ENCODE measurements at regions of chr2 and their contacts with region 1.

Region 1: DNA sequence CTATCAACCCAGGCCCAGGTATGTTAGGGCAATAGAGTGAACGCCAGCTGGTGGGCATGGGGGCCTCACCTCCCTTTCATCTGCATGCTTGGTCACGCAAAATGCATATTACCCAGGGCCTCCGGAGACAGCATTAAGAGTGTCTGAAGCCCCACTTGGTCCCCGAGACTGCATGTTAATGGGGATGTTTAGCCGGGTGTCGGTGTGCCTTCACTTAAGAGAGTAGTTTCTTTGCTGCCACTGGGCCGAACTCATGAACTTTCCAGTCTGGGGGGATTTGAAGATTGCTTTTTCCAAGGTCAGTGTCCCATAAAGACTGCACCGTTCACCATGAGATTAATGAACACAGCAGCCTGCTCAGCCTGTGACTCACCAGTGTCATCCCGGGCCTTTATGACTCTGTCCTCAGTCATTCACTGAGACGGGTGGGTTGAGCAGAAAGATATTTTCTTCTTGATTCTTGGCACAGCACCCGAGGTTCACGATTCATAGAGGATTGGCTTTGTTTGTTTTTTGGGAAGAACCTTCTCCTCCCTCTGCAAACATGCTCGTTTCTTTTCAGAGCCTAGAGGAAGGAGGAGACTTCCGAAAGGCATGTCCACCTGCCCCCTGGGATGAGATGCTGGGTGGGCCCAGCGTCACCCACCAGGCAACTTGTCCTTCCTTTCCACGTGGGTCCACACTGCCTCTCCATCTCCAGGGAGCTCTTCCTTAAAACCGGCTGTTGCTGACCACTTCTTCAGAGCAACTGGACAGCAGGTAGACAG is 199.1 kb downstream of the GLI2 start:
- DNase-seq: peak; percentile 56 to 69
- H3K4me3 ChIP-seq: no peak overlapping the region
- H3K4me3 Mint-ChIP-seq: peak overlapping the region; percentile 68
- H3K27ac Mint-ChIP-seq: peak overlapping the region; percentile 92
- H3K4me1 ChIP-seq: peaks cover 67% of the 10 kb centered on the region
- H3K4me1 Mint-ChIP-seq: peaks cover 57% of the 10 kb centered on the region
- H3K27me3 ChIP-seq: no peaks in the 10 kb centered on the region
- H3K27me3 Mint-ChIP-seq: no peaks in the 10 kb centered on the region
- CTCF ChIP-seq: no peak

Region 2: DNA sequence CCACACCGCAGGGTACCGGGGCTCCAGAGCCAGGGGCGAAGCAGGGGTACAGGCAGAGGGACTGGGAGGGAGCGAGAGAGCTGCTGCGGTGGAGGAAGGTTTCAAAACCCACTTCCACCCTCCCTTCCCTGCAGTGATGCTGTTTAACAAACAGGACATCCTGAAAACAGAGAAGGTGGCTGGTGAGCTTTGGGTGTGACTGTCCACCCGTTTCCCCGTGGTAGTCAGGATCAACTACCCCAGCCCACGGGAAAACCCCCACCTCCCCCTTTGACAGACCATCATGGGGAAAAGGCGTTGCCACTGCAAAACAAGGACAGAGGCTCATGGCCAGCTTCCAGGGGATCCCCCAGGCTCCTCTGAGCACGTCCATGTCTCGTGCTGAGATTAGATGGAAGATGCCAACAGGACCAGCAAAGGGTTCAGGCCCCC is 724.5 kb before region 1 on chr2:
- CTCF ChIA-PET with region 1: no interaction called
- POLR2A ChIA-PET with region 1: no interaction called
- intact Hi-C with region 1: no loop called
- DNase-seq: no peak
- H3K4me3 ChIP-seq: no peak overlapping the region
- H3K4me3 Mint-ChIP-seq: no peak overlapping the region
- H3K27ac Mint-ChIP-seq: no peak overlapping the region
- H3K4me1 ChIP-seq: no peaks in the 10 kb centered on the region
- H3K4me1 Mint-ChIP-seq: no peaks in the 10 kb centered on the region
- H3K27me3 ChIP-seq: no peaks in the 10 kb centered on the region
- H3K27me3 Mint-ChIP-seq: no peaks in the 10 kb centered on the region
- CTCF ChIP-seq: no peak

Region 3: GRCh38 chr2:120735746-120736170 is 199.0 kb before region 1 on chr2 and contains the start of gene GLI2:
- CTCF ChIA-PET with region 1: no interaction called
- POLR2A ChIA-PET with region 1: no interaction called
- intact Hi-C with region 1: loop called (anchors 5 kb)
- DNase-seq: peak; percentile 78 to 85
- H3K4me3 ChIP-seq: peak within 1 kb of the TSS; percentile 39
- H3K4me3 Mint-ChIP-seq: peak within 1 kb of the TSS; percentile 84
- H3K27ac Mint-ChIP-seq: no peak within 1 kb of the TSS
- H3K4me1 ChIP-seq: peaks cover 3% of the 10 kb centered on the region; the same call in 1 of the 2 replicates
- H3K4me1 Mint-ChIP-seq: peaks cover 9% of the 10 kb centered on the region
- H3K27me3 ChIP-seq: 0 out of 2 replicates have a peak, but pooled peaks cover 3% of the 10 kb centered on the region
- H3K27me3 Mint-ChIP-seq: peaks cover 21% of the 10 kb centered on the region
- CTCF ChIP-seq: peak; percentile 74 to 75
- total RNA-seq, gene GLI2: 0.58 and 0.70 TPM in 2 replicates

Region 4: DNA sequence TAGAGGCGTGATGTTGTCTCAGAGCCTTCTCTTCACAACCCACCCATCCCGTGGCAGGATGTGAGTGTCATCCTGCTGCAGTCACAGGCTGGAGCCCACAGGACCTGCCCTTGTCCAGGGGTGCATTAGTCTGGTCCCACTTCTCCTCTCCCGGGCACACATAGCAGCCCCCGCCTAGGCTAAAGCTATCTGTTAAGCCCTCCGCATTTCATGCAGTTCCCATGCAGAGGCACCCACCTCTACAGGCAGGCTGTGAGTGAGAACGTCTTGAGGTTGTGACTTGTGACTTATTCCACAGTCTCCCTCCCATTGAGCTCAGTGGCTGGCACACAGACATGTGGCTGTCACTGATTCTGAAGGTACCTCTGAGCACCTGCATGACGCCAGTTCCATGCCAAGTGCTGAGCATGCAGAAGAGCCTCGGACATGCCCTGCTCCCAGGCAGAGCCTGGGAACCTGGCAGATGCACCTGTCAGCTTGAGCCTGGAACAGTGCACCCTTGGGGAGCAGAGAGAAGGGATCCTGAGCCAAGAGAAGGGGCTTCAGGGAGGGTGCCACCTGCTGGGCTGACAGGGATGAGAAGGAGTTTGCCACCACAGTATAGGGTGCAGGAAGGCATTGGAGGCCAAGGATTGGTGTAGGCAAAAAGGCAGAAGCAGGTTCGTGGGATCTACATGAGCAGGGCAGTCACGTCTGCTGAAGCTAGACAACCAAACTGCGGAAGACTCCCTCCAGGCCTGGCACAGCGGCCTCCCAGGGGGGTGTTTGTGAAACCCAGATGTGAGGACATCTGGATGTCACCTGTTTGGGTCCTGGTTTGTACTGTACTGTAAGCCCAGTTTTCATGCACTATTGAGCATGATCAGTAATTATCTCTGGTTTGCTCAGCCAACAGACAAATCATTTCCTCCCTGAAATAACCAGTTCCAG is 14.5 kb after region 1 on chr2:
- CTCF ChIA-PET with region 1: interaction called, 7 read pairs
- POLR2A ChIA-PET with region 1: no interaction called
- intact Hi-C with region 1: loop called (anchors 1 kb)
- DNase-seq: peak in 1 of 2 experiments; percentile 61
- H3K4me3 ChIP-seq: no peak overlapping the region
- H3K4me3 Mint-ChIP-seq: no peak overlapping the region
- H3K27ac Mint-ChIP-seq: no peak overlapping the region
- H3K4me1 ChIP-seq: no peaks in the 10 kb centered on the region
- H3K4me1 Mint-ChIP-seq: peaks cover 6% of the 10 kb centered on the region
- H3K27me3 ChIP-seq: no peaks in the 10 kb centered on the region
- H3K27me3 Mint-ChIP-seq: no peaks in the 10 kb centered on the region
- CTCF ChIP-seq: peak; percentile 51 to 68

Region 5: GRCh38 chr2:121008978-121009377 is 74.2 kb after region 1 on chr2:
- CTCF ChIA-PET with region 1: no interaction called
- POLR2A ChIA-PET with region 1: no interaction called
- intact Hi-C with region 1: no loop called
- DNase-seq: peak in 1 of 2 experiments; percentile 48
- H3K4me3 ChIP-seq: no peak overlapping the region
- H3K4me3 Mint-ChIP-seq: no peak overlapping the region
- H3K27ac Mint-ChIP-seq: no peak overlapping the region
- H3K4me1 ChIP-seq: no peaks in the 10 kb centered on the region; the same call in 1 of the 2 replicates
- H3K4me1 Mint-ChIP-seq: no peaks in the 10 kb centered on the region
- H3K27me3 ChIP-seq: no peaks in the 10 kb centered on the region
- H3K27me3 Mint-ChIP-seq: no peaks in the 10 kb centered on the region
- CTCF ChIP-seq: peak; percentile 23 to 32

Region 6: DNA sequence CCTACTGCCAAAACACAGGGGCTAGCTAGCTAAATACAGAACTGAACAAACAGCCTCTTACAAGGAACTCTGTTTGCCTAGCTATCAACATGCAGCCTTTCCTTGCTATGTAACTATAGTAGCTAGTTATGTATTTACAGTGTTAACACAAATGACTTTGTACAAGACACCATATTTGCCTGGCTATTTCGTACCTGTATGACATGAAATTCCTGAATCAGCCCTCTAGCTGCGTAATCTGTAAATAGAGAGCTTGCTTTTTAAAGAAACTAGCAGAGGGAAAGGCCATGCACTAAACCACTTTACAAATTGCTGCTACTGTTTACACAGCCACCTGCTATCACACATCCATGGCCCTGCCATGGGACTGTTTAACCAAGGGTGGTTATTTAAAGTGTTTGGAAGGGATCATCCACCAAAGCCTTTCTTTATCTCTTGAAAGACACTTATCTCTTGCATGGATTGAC is 101.5 kb after region 1 on chr2:
- CTCF ChIA-PET with region 1: interaction called, 10 read pairs
- POLR2A ChIA-PET with region 1: no interaction called
- intact Hi-C with region 1: loop called (anchors 1 kb)
- DNase-seq: peak; percentile 88
- H3K4me3 ChIP-seq: no peak overlapping the region
- H3K4me3 Mint-ChIP-seq: no peak overlapping the region
- H3K27ac Mint-ChIP-seq: no peak overlapping the region
- H3K4me1 ChIP-seq: peaks cover 15% of the 10 kb centered on the region
- H3K4me1 Mint-ChIP-seq: peaks cover 22% of the 10 kb centered on the region
- H3K27me3 ChIP-seq: peaks cover 10% of the 10 kb centered on the region
- H3K27me3 Mint-ChIP-seq: peaks cover 27% of the 10 kb centered on the region
- CTCF ChIP-seq: no peak

Region 7: GRCh38 chr2:121076885-121077549 is 142.3 kb after region 1 on chr2:
- CTCF ChIA-PET with region 1: interaction called, 4 read pairs
- POLR2A ChIA-PET with region 1: interaction called, 12 read pairs
- intact Hi-C with region 1: loop called (anchors 5 kb)
- DNase-seq: peak; percentile 82 to 90
- H3K4me3 ChIP-seq: no peak overlapping the region
- H3K4me3 Mint-ChIP-seq: no peak overlapping the region
- H3K27ac Mint-ChIP-seq: no peak overlapping the region
- H3K4me1 ChIP-seq: peaks cover 20% of the 10 kb centered on the region
- H3K4me1 Mint-ChIP-seq: no peaks in the 10 kb centered on the region
- H3K27me3 ChIP-seq: no peaks in the 10 kb centered on the region
- H3K27me3 Mint-ChIP-seq: no peaks in the 10 kb centered on the region
- CTCF ChIP-seq: peak; percentile 97 to 98